Activated B cell treated with CpG ODN at 0.5 μM for 24 hours (primary cell): ENCODE measurements at regions of chr1 and their contacts with region 1.

Region 1: DNA sequence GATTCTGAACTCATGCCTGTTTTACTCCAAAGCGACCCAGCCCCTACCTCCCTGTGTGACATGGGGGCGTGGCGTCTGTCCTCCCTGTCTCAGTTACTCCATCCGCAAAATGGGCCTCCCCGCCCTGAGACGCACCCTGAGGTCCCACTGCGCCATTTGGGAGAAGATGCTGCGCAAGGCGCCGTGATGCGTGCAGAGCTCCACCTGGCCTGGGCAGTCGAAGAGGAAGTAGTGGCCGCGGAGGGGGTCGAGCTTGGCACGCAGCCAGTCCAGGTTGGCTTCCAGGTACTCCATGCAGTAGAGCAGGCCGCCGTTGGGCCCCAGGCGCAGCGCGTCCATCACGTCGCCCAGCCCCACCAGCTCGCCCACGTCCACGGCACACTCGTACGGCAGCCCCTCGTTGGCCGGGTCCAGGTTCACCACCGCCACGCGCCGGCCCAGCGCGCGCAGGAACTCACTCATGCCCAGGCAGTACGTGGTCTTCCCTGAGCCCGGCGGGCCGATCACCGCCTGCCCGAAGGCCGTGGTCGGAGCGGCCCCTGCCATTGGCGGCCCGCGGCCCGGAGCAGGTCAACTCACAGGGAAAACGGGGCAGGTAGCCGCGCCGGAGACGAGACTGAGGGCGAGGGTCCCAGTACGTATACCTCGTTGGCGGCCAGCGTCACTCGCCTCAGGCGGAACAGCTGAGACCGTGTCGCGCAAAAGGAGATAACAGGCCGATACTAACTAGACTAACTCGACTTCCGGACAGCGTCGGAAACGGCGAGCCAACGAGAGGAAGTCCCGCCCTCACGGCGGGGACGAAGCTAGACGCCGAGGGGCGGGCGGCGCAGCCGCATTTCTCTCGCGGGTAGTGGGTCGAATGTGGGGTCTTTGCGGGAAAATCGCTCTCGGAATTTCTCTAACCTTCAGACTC is at the start of gene GPN2:
- DNase-seq: peak; percentile 74
- ATAC-seq: peak; percentile 95
- H3K4me3 Mint-ChIP-seq: peak within 1 kb of the TSS; percentile 93
- H3K27ac Mint-ChIP-seq: peak within 1 kb of the TSS; percentile 89
- H3K4me1 Mint-ChIP-seq: peaks cover 32% of the 10 kb centered on the region
- H3K27me3 Mint-ChIP-seq: no peaks in the 10 kb centered on the region
- CTCF ChIP-seq: no peak
- total RNA-seq, gene GPN2: 42.6 and 48.6 TPM in 2 replicates

Region 2: DNA sequence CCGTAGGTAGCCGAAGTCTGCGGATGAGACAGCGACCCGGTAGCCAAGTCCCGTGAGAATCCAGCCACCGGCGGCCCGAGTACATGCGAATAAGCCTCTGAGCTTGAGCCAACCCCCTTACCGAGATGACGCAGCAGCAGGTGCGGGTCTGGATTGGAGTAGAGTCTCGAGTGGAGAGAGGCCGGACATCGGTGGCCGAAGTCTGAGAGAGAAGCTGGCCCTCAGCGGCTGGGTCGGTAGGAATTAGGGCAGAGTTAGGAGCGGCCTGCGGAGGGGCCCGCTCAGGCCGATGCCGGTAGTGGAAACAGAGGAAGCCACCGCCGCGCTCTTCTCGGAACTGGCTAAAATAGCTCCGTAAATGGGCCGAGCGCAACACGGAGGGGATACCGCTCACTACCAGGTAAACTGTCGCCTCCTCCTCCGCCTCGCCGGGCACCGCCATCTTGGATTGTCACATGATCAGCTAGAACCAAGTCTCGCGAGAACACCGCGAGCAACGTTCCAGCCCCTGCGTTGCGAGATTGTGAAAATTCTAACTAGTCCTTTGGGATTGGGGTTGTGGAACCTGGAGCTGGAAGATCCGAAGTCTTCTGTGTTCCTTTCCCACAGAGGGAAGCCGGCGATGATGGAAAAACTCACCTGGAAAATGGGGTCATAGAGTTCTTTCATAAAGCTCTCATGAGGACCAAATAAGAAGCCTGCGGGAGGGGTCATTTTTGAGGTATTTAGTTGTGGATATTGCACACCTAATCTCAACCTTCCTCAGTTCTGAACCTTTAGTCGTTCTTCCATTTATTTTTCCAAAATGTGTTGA is 10.4 kb after region 1 on chr1 and contains the start of gene GPATCH3:
- CTCF ChIA-PET with region 1: interaction called, 6 read pairs
- POLR2A ChIA-PET with region 1: interaction called, 64 read pairs
- intact Hi-C with region 1: loop called (anchors 1 kb)
- DNase-seq: peak; percentile 68
- ATAC-seq: peak; percentile 89
- H3K4me3 Mint-ChIP-seq: peak within 1 kb of the TSS; percentile 99
- H3K27ac Mint-ChIP-seq: peak within 1 kb of the TSS; percentile 100
- H3K4me1 Mint-ChIP-seq: peaks cover 32% of the 10 kb centered on the region
- H3K27me3 Mint-ChIP-seq: no peaks in the 10 kb centered on the region
- CTCF ChIP-seq: no peak
- total RNA-seq, gene GPATCH3: 24.0 and 26.0 TPM in 2 replicates